Caco-2 (cell line): ENCODE measurements at regions of chr14 and their contacts with region 1.

Region 1: DNA sequence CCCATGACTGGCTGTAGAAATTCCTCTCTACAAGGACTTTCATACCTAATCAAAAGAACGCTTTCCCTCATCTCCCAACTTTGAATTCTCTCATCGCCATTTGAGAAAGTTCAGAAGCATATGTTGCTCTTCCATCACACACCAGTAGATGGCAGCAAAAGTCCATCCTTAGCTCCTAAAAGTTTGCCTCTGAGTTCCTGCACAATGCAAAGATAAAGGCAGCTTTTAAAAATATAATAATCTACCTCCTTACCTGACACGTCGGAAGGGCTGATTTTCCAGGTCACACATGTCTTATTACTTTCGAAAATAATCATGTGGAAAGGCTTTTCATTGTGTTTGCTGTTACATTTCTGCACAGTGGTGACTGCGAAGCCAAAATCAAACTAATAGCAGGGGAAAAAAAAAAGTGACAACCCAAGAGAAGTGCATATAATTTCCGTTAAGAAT is 456.7 kb upstream of the SEL1L start:
- DNase-seq: peak; percentile 38 to 63
- H3K4me3 ChIP-seq: no peak overlapping the region
- H3K4me3 Mint-ChIP-seq: no peak overlapping the region
- H3K27ac Mint-ChIP-seq: no peak overlapping the region
- H3K4me1 ChIP-seq: no peaks in the 10 kb centered on the region
- H3K4me1 Mint-ChIP-seq: no peaks in the 10 kb centered on the region
- H3K27me3 ChIP-seq: no peaks in the 10 kb centered on the region
- H3K27me3 Mint-ChIP-seq: peaks cover 6% of the 10 kb centered on the region
- CTCF ChIP-seq: peak; percentile 82 to 84

Region 2: GRCh38 chr14:81565441-81566290 is 424.7 kb before region 1 on chr14:
- CTCF ChIA-PET with region 1: interaction called, 4 read pairs
- POLR2A ChIA-PET with region 1: no interaction called
- intact Hi-C with region 1: loop called (anchors 2 kb)
- DNase-seq: peak in 1 of 2 experiments; percentile 55
- H3K4me3 ChIP-seq: no peak overlapping the region
- H3K4me3 Mint-ChIP-seq: no peak overlapping the region
- H3K27ac Mint-ChIP-seq: no peak overlapping the region
- H3K4me1 ChIP-seq: no peaks in the 10 kb centered on the region
- H3K4me1 Mint-ChIP-seq: peaks cover 8% of the 10 kb centered on the region
- H3K27me3 ChIP-seq: no peaks in the 10 kb centered on the region
- H3K27me3 Mint-ChIP-seq: peaks cover 10% of the 10 kb centered on the region
- CTCF ChIP-seq: peak; percentile 68 to 69

Region 3: DNA sequence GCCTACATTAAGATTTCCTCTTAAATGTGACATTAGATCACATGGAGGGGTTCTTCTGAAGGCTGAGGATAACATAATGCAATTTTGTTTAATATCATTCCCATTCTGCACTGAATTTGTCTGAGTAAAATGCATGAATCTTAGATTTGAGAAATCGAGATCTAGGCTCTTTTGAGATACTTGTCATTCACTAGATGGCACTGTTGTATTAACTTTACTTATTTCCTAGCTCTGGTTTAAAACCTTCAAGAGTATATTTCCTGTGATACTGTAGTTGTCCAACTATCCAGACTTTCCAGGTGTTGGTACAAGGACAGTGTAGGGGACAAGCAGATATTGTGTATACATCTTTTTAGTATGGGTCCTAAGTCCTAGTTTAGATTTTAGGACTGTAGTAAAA is 365.0 kb before region 1 on chr14:
- CTCF ChIA-PET with region 1: interaction called, 5 read pairs
- POLR2A ChIA-PET with region 1: no interaction called
- intact Hi-C with region 1: loop called (anchors 1 kb)
- DNase-seq: peak in 1 of 2 experiments; percentile 5
- H3K4me3 ChIP-seq: no peak overlapping the region
- H3K4me3 Mint-ChIP-seq: no peak overlapping the region
- H3K27ac Mint-ChIP-seq: no peak overlapping the region
- H3K4me1 ChIP-seq: no peaks in the 10 kb centered on the region
- H3K4me1 Mint-ChIP-seq: no peaks in the 10 kb centered on the region
- H3K27me3 ChIP-seq: no peaks in the 10 kb centered on the region
- H3K27me3 Mint-ChIP-seq: peaks cover 13% of the 10 kb centered on the region
- CTCF ChIP-seq: peak; percentile 25 to 44

Region 4: DNA sequence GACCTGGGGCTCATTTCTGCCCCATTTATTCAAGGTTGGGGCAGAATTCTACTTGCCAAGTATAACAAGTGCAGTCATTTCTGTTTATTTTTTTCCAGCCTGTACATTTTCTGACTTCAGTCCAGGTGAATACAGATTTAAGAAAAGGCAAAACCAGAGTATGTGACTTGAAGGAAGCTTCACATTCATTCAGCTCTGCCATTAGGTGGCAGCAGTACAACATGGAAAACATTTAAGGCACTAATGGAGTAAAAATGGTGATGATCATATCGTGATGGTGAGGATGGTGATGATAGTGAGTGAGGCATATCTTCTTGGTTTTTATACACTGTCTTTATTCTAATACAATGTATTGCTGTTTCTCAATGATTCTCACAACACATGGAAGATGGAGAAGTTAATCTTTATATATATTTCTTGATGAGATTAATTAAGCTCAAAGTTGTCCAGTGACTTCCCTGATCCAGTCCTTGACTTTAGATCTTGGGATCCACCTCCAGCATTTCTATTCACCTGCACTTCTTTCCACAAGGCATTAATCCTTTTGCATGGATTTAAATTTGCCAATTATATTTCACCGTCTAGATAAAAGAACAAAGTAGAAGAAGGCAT is 280.0 kb before region 1 on chr14:
- CTCF ChIA-PET with region 1: interaction called, 3 read pairs
- POLR2A ChIA-PET with region 1: no interaction called
- intact Hi-C with region 1: loop called (anchors 1 kb)
- DNase-seq: peak in 1 of 2 experiments; percentile 57
- H3K4me3 ChIP-seq: no peak overlapping the region
- H3K4me3 Mint-ChIP-seq: no peak overlapping the region
- H3K27ac Mint-ChIP-seq: no peak overlapping the region
- H3K4me1 ChIP-seq: no peaks in the 10 kb centered on the region
- H3K4me1 Mint-ChIP-seq: no peaks in the 10 kb centered on the region
- H3K27me3 ChIP-seq: no peaks in the 10 kb centered on the region
- H3K27me3 Mint-ChIP-seq: peaks cover 3% of the 10 kb centered on the region
- CTCF ChIP-seq: peak; percentile 55 to 56

Region 5: GRCh38 chr14:82104013-82104412 is 113.7 kb after region 1 on chr14:
- CTCF ChIA-PET with region 1: no interaction called
- POLR2A ChIA-PET with region 1: no interaction called
- intact Hi-C with region 1: no loop called
- DNase-seq: no peak
- H3K4me3 ChIP-seq: no peak overlapping the region
- H3K4me3 Mint-ChIP-seq: no peak overlapping the region
- H3K27ac Mint-ChIP-seq: no peak overlapping the region
- H3K4me1 ChIP-seq: no peaks in the 10 kb centered on the region
- H3K4me1 Mint-ChIP-seq: no peaks in the 10 kb centered on the region
- H3K27me3 ChIP-seq: no peaks in the 10 kb centered on the region
- H3K27me3 Mint-ChIP-seq: no peaks in the 10 kb centered on the region
- CTCF ChIP-seq: no peak

Region 6: GRCh38 chr14:82366803-82367202 is 376.5 kb after region 1 on chr14:
- CTCF ChIA-PET with region 1: interaction called, 3 read pairs
- POLR2A ChIA-PET with region 1: no interaction called
- intact Hi-C with region 1: loop called (anchors 1 kb)
- DNase-seq: peak in 1 of 2 experiments; percentile 26
- H3K4me3 ChIP-seq: no peak overlapping the region
- H3K4me3 Mint-ChIP-seq: no peak overlapping the region
- H3K27ac Mint-ChIP-seq: no peak overlapping the region
- H3K4me1 ChIP-seq: no peaks in the 10 kb centered on the region
- H3K4me1 Mint-ChIP-seq: no peaks in the 10 kb centered on the region
- H3K27me3 ChIP-seq: no peaks in the 10 kb centered on the region
- H3K27me3 Mint-ChIP-seq: no peaks in the 10 kb centered on the region
- CTCF ChIP-seq: peak; percentile 22 to 30

Region 7: GRCh38 chr14:82710267-82710841 is 720.0 kb after region 1 on chr14:
- CTCF ChIA-PET with region 1: no interaction called
- POLR2A ChIA-PET with region 1: no interaction called
- intact Hi-C with region 1: loop called (anchors 1 kb)
- DNase-seq: peak; percentile 60 to 77
- H3K4me3 ChIP-seq: no peak overlapping the region
- H3K4me3 Mint-ChIP-seq: no peak overlapping the region
- H3K27ac Mint-ChIP-seq: no peak overlapping the region
- H3K4me1 ChIP-seq: no peaks in the 10 kb centered on the region
- H3K4me1 Mint-ChIP-seq: no peaks in the 10 kb centered on the region
- H3K27me3 ChIP-seq: no peaks in the 10 kb centered on the region
- H3K27me3 Mint-ChIP-seq: peaks cover 6% of the 10 kb centered on the region
- CTCF ChIP-seq: peak; percentile 78 to 88